Activated CD4-positive, alpha-beta T cell treated with anti-CD3 and anti-CD28 coated beads, Interleukin-2, amount 10 ng/mL, durations not matched to agents 7 days and 5 days (primary cell): ENCODE measurements at regions of chr17 and their contacts with region 1.

Region 1: DNA sequence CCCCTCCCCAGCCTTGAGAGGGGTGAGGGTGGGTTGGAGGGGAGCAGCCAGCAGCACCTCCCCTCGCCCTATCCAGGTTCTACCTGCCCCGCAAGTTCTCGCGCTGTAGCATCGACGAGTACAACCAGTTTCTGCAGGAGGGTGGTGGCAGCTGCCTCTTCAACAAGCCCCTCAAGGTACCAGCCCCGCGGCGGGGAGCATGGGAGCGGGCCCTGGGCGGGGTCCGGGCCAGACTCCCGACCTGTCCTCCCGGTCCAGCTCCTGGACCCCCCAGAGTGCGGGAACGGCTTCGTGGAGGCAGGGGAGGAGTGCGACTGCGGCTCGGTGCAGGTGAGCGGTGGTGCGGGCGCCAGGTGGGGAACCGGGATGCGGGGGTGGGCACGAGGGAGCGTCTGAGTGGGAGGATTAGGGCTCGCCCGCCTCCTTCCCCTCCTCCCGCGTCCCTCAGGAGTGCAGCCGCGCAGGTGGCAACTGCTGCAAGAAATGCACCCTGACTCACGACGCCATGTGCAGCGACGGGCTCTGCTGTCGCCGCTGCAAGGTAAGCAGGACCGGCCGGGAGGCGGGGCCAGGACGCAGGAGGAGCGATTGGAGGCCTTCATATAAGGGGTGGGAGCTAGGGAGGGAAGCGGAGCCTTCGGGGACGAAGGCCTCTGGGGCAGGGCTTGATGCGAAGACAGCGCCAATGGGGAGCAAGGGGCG is 16.5 kb downstream of the ADAM11 start:
- DNase-seq: peak; percentile 98
- H3K4me3 Mint-ChIP-seq: peak overlapping the region; percentile 83
- H3K27ac Mint-ChIP-seq: peak overlapping the region; percentile 88
- H3K4me1 Mint-ChIP-seq: peaks cover 21% of the 10 kb centered on the region
- H3K27me3 Mint-ChIP-seq: peaks cover 9% of the 10 kb centered on the region

Region 2: GRCh38 chr17:44607836-44608690 is 167.2 kb before region 1 on chr17:
- CTCF ChIA-PET with region 1: no interaction called
- POLR2A ChIA-PET with region 1: no interaction called
- DNase-seq: no peak
- H3K4me3 Mint-ChIP-seq: no peak overlapping the region
- H3K27ac Mint-ChIP-seq: no peak overlapping the region
- H3K4me1 Mint-ChIP-seq: no peaks in the 10 kb centered on the region
- H3K27me3 Mint-ChIP-seq: peaks cover 3% of the 10 kb centered on the region

Region 3: GRCh38 chr17:44794851-44795413 is 19.6 kb after region 1 on chr17:
- CTCF ChIA-PET with region 1: interaction called, 14 read pairs
- POLR2A ChIA-PET with region 1: no interaction called
- DNase-seq: no peak
- H3K4me3 Mint-ChIP-seq: no peak overlapping the region
- H3K27ac Mint-ChIP-seq: no peak overlapping the region
- H3K4me1 Mint-ChIP-seq: peaks cover 12% of the 10 kb centered on the region
- H3K27me3 Mint-ChIP-seq: peaks cover 5% of the 10 kb centered on the region

Region 4: DNA sequence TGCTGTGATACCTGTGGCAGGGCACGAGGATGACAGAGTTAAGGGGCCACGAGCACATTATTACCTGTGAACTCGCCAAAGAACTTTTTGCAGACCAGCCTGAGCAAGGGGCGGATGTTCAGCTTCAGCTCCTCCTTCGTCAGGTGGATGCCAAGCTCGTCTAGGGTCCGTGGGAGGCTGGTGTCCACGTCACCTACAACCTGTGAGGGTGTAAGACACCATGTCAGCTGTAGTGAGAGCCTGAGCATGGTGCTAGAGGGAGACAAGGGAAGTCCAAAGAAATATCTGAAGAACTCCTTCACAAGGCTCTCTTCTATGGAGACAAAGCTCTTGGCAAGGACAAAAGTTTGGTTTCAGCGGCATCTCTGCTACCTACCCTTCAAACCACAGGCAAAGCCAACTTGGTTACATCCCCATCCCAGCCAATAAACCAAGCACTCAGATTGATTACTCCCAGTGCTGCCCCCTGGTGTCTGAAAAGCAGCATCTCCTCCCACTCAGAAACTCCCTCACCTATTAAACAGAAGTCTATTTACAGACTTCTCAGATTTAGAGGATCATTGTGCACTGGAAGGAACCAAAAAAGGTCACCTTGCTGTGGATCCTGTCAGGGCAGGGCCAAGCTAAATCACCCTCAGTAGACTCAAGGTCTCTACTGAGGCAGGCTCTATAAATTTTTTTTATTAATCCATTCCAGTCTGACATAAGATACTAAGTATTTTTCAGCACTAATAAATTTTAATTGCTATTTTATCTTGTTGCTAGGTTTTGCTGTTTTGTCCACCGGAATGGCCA is 89.8 kb after region 1 on chr17:
- CTCF ChIA-PET with region 1: interaction called, 23 read pairs
- POLR2A ChIA-PET with region 1: interaction called, 3 read pairs
- DNase-seq: peak; percentile 85
- H3K4me3 Mint-ChIP-seq: no peak overlapping the region
- H3K27ac Mint-ChIP-seq: no peak overlapping the region
- H3K4me1 Mint-ChIP-seq: no peaks in the 10 kb centered on the region
- H3K27me3 Mint-ChIP-seq: no peaks in the 10 kb centered on the region

Region 5: DNA sequence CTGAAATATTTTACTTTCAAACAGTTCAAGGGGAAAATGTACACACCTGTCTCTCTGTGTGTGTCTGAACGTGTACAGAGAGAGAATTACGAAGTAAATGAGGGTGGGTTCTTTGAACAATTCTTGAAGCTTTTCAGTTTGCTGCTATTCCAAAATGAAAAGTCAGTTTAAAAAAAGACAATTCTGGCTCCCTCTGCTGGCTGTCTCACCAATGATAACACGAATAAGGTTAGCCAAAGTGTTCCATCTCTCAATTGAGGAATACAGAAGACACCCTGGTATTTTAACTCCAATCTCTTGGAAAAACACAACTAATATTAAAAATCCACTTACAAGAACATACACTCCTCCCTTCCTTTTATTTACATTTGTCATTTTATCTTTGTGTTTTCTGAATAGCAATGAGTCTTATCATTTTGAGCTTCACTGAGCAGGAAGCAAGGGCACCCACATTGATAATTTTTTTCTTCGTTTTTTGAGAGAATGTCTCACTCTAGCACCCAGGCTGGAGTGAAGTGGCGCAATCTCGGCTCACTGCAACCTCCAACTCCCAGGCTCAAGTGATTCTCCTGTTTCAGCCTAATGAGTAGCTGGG is 103.4 kb after region 1 on chr17:
- CTCF ChIA-PET with region 1: interaction called, 11 read pairs
- POLR2A ChIA-PET with region 1: no interaction called
- DNase-seq: peak; percentile 55
- H3K4me3 Mint-ChIP-seq: no peak overlapping the region
- H3K27ac Mint-ChIP-seq: no peak overlapping the region
- H3K4me1 Mint-ChIP-seq: no peaks in the 10 kb centered on the region
- H3K27me3 Mint-ChIP-seq: no peaks in the 10 kb centered on the region